ENCODE measurements at regions of chr14 and their contacts with region 1.

Region 1: DNA sequence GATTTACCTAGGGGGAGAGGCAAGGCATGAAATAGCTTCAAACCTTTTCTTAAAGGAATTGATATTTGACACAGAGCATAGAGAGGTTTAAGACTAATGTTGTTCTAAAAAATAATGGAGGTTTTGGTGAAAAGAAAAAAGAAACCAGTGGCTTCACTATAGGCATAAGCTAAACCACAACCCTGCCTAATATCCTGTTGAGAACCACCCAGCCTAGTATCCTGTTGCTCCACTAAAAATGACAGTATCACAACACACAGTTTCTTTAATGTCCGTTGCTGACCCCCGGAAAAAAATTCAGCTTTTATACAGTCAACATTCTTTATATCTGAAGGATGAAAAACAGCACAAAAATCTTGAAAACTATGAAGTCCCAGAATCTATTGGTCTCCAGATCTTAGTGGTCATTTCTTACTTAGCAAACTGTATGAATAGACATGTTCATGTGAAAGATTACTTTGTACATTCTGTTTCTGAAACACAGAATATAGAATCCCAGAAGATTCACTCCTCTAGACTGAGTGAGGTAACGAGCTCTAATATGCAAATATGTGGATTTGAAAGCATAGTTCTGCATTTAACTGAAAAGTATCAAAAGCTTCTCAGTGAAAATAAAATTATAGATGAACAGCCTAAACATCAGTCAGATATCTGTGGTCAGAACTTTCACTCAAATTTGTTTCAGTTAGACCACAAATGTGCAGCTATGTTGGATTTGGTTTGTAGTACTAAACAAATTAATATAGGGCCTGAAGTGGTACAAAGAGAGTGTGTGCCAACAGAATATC is 40.5 kb downstream of the GALC start:
- DNase-seq: no peak
- ATAC-seq: peak; percentile 85
- H3K4me3 Mint-ChIP-seq: peak overlapping the region; percentile 78
- H3K27ac Mint-ChIP-seq: peak overlapping the region; percentile 91
- H3K4me1 Mint-ChIP-seq: peaks cover 34% of the 10 kb centered on the region
- H3K27me3 Mint-ChIP-seq: no peaks in the 10 kb centered on the region

Region 2: GRCh38 chr14:87992718-87993628 is 40.5 kb after region 1 on chr14 and contains the start of gene GALC:
- POLR2A ChIA-PET with region 1: interaction called, 21 read pairs
- DNase-seq: peak; percentile 95
- ATAC-seq: peak; percentile 95
- H3K4me3 Mint-ChIP-seq: peak within 1 kb of the TSS; percentile 99
- H3K27ac Mint-ChIP-seq: peak within 1 kb of the TSS; percentile 96
- H3K4me1 Mint-ChIP-seq: peaks cover 61% of the 10 kb centered on the region
- H3K27me3 Mint-ChIP-seq: no peaks in the 10 kb centered on the region
- total RNA-seq, gene GALC: 24.7 to 28.2 TPM

Measured in activated naive CD8-positive, alpha-beta T cell treated with anti-CD3 and anti-CD28 coated beads, Interleukin-2, amount 10 ng/mL, durations not matched to agents 7 days and 5 days (primary cell).